ENCODE measurements at regions of chr5 and their contacts with region 1.

Region 1: GRCh38 chr5:79020861-79021561 is 35.9 kb upstream of the ARSB start:
- DNase-seq: peak; percentile 64
- ATAC-seq: peak; percentile 83
- H3K4me3 Mint-ChIP-seq: peak overlapping the region; percentile 48
- H3K27ac Mint-ChIP-seq: no peak overlapping the region
- H3K4me1 Mint-ChIP-seq: peaks cover 20% of the 10 kb centered on the region
- H3K27me3 Mint-ChIP-seq: no peaks in the 10 kb centered on the region; the same call in 1 of the 2 replicates
- CTCF ChIP-seq: peak; percentile 51; the same call in 1 of the 2 replicates

Region 2: DNA sequence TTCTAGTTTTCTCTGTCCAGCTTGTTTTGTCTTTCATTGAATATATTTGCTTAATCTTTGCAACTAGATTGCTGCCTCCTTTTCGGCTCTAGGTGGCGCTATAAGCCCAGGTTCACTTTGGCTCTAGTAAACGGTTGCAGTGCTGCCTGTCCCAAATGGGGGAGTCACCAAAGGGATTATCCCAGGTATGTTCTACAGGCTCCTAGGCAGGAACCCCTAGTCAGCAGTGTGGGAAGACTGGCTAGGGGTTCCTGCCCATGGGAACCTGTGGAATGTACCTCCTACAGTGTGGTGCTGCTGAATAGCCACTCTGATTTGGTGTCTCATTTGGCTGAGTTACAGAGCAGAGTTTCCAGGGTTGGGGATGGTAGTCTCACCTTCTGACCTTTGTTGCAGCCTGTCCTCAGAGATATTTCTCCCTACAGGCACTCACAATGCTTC is 121.1 kb before region 1 on chr5:
- CTCF ChIA-PET with region 1: interaction called, 50 read pairs
- POLR2A ChIA-PET with region 1: no interaction called
- DNase-seq: peak; percentile 74
- ATAC-seq: peak; percentile 98
- H3K4me3 Mint-ChIP-seq: no peak overlapping the region
- H3K27ac Mint-ChIP-seq: no peak overlapping the region
- H3K4me1 Mint-ChIP-seq: peaks cover 2% of the 10 kb centered on the region
- H3K27me3 Mint-ChIP-seq: no peaks in the 10 kb centered on the region
- CTCF ChIP-seq: peak; percentile 79

Region 3: DNA sequence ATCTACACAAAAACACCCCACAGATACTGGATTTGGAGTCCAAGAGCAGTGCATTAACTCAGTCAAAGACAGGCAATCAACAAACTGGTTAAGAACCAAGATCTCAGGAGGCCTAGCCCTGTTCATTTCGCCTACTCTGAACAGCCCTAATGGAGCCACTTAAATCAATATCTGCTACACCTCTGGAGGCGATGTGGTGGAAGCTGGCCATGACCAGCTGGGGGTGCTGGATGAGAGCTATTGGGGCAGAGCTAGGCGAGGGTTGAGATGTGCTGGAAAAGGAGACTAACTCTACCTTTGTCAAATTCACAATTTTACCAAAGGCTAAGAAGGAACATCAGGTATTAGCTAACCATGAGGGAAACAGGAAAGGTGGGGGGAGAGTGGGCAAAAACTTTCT is 12.6 kb before region 1 on chr5:
- CTCF ChIA-PET with region 1: interaction called, 15 read pairs
- POLR2A ChIA-PET with region 1: no interaction called
- DNase-seq: peak; percentile 28
- ATAC-seq: peak; percentile 91
- H3K4me3 Mint-ChIP-seq: no peak overlapping the region
- H3K27ac Mint-ChIP-seq: no peak overlapping the region
- H3K4me1 Mint-ChIP-seq: no peaks in the 10 kb centered on the region
- H3K27me3 Mint-ChIP-seq: no peaks in the 10 kb centered on the region
- CTCF ChIP-seq: no peak

Region 4: DNA sequence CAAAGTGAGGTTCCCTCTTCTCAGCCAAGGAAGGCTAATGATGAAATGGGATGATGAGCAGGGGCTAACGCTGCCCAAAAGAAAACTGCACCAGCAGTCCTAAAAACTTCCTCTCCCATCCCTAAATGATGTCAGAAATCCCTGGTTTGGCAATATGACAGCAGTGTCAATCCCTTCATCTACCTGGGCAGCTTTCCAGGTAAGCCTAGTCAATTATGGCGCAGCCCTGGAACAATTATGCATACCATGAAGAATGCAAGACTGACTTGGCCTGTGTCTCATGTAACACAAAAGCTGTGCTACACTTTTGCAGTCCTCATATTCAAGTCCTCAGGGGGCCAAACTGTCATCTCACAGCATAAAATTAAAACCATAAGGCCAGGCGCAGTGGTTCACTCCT is 41.4 kb after region 1 on chr5:
- CTCF ChIA-PET with region 1: interaction called, 10 read pairs
- POLR2A ChIA-PET with region 1: no interaction called
- DNase-seq: no peak
- ATAC-seq: no peak
- H3K4me3 Mint-ChIP-seq: no peak overlapping the region
- H3K27ac Mint-ChIP-seq: no peak overlapping the region
- H3K4me1 Mint-ChIP-seq: peaks cover 5% of the 10 kb centered on the region
- H3K27me3 Mint-ChIP-seq: no peaks in the 10 kb centered on the region
- CTCF ChIP-seq: no peak

Region 5: GRCh38 chr5:79109527-79110492 is 88.8 kb after region 1 on chr5:
- CTCF ChIA-PET with region 1: interaction called, 20 read pairs
- POLR2A ChIA-PET with region 1: no interaction called
- DNase-seq: peak; percentile 64
- ATAC-seq: peak; percentile 71
- H3K4me3 Mint-ChIP-seq: no peak overlapping the region
- H3K27ac Mint-ChIP-seq: no peak overlapping the region
- H3K4me1 Mint-ChIP-seq: peaks cover 8% of the 10 kb centered on the region; the same call in 1 of the 2 replicates
- H3K27me3 Mint-ChIP-seq: peaks cover 47% of the 10 kb centered on the region
- CTCF ChIP-seq: peak; percentile 52; the same call in 1 of the 2 replicates